IMR-90 (cell line): ENCODE measurements at regions of chr13 and their contacts with region 1.

Region 1: GRCh38 chr13:46369506-46370277 is 17.4 kb downstream of the RUBCNL start:
- DNase-seq: peak; percentile 68
- ATAC-seq: peak; percentile 75
- H3K4me3 ChIP-seq: no peak overlapping the region
- H3K27ac ChIP-seq: peak overlapping the region; percentile 67; the same call in 1 of the 2 replicates
- H3K4me1 ChIP-seq: peaks cover 2% of the 10 kb centered on the region; the same call in 1 of the 2 replicates
- H3K27me3 ChIP-seq: peaks cover 3% of the 10 kb centered on the region
- CTCF ChIP-seq: no peak
- POLR2A ChIP-seq: no peak
- RAD21 ChIP-seq: no peak

Region 2: GRCh38 chr13:46303742-46304385 is 65.8 kb before region 1 on chr13:
- CTCF ChIA-PET with region 1: no interaction called
- POLR2A ChIA-PET with region 1: no interaction called
- dilution Hi-C with region 1: no loop called
- in situ Hi-C with region 1: no loop called
- intact Hi-C with region 1: no loop called
- DNase-seq: no peak
- ATAC-seq: no peak
- H3K4me3 ChIP-seq: no peak overlapping the region
- H3K27ac ChIP-seq: no peak overlapping the region
- H3K4me1 ChIP-seq: no peaks in the 10 kb centered on the region
- H3K27me3 ChIP-seq: no peaks in the 10 kb centered on the region
- CTCF ChIP-seq: no peak
- POLR2A ChIP-seq: no peak
- RAD21 ChIP-seq: no peak

Region 3: DNA sequence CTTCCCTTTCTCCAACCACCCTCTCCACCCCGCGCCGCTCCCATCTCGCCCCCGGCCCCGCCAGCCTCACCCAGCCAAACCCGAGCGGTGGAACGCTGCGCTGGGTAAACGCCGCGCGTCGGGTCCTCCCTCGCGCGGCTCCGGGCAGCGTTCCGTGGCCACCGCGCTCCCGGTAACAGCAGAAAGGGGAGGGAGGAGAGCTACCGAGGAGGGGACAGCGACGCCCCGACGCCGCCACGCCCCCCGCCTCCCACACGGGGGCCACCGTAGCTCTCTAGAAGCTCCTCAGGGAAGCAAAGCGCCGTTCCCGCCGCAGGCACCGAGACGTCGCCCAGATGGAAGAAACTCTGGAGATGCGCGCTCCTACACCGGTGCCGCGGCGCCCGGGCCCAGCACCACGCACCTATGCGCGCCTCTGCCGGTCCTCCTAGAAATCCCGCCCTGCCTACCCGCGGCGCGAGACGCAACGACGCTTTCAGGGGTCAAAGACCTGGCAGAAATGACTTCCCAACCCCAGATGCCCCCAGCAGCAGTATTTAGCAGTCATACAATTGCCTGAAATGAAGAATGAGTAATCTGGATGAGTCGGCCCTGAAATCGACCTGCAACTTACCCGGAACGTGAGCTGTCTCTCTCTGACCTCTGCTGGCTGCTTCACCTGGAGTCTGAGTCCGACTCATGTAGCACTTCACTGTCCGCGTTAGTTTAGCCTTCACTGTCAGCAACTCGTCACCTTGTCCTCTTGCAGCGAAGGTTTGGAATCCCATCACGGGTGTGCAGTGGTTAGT is 17.6 kb after region 1 on chr13 and contains the start of gene RUBCNL:
- CTCF ChIA-PET with region 1: no interaction called
- POLR2A ChIA-PET with region 1: interaction called, 11 read pairs
- dilution Hi-C with region 1: no loop called
- in situ Hi-C with region 1: no loop called
- intact Hi-C with region 1: no loop called
- DNase-seq: no peak
- ATAC-seq: no peak
- H3K4me3 ChIP-seq: no peak within 1 kb of the TSS; the same call in 1 of the 2 replicates
- H3K27ac ChIP-seq: no peak within 1 kb of the TSS
- H3K4me1 ChIP-seq: no peaks in the 10 kb centered on the region
- H3K27me3 ChIP-seq: peaks cover 44% of the 10 kb centered on the region
- CTCF ChIP-seq: no peak
- POLR2A ChIP-seq: no peak
- RAD21 ChIP-seq: no peak
- total RNA-seq, gene RUBCNL: under 0.01 TPM in 1 of 2 replicates, not detected in the other